Left ventricle myocardium superior (tissue), 1 donor: ENCODE measurements at regions of chr4 and their contacts with region 1.

Region 1: DNA sequence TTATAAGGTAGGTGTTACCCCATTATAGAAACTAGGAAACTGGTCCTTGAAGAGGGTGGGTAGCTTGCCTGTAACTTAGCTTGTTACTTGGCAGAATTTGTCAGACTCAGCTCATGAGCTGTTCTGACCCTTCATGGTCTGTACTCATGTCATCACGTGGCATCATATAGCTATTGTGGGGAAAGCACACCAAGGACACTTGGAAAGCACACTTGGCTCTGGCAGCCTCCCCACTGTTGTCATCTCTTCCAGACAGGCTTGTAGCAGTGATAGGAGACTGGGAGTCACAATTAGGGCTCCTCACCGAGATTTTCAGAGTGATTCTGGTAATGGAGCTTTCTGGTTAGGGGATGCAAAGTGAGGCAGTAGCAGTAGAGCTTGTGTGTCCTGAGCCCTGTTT is 30.4 kb downstream of the ADH5 start:
- DNase-seq: peak; percentile 73
- ATAC-seq: peak; percentile 77

Region 2: GRCh38 chr4:98566361-98567008 is 491.7 kb before region 1 on chr4:
- intact Hi-C with region 1: no loop called
- DNase-seq: no peak
- ATAC-seq: peak; percentile 48

Region 3: DNA sequence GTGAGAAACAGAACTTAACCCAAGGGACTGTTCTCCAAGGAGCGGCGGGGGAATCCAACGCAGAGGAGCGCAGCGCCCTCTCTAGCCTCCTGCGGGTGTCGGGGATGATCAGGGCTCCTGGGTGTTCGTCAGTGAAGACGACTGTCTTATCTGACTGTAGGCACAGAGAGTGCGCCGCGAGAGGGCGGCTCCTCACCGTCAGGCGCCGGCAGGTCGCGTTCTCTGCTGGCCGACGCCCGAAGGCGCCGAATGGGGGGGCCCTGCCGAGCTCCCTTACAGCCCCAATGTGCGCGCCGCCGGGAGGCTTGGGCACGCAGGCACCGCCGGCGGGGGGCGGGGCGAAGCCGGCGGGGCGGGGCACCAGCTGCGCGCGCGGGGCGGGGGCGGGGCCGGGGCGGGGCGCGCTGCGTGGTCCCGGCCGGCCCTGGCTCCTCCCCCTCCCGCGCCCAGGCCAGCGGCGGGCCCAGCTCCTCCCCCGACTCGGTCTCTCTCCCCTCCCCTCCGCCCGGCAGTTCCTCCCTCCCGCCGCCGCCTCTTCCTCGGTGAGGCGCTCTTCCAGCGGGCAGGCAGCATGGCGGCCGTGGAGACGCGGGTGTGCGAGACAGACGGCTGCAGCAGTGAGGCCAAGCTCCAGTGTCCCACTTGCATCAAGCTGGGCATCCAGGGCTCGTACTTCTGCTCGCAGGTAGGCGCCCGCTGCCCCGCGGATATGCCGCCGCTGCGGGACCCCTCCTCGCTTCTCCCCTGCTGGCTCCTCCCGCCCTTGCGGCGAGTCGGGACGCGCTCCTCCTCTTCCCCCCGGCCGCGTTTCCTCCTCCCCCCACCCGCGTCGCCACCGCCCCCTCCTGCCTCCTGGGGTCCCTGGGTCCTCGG is 62.8 kb before region 1 on chr4 and contains the start of gene METAP1:
- intact Hi-C with region 1: loop called (anchors 5 kb)
- DNase-seq: peak; percentile 97
- ATAC-seq: peak; percentile 94
- total RNA-seq, gene METAP1: 75.8 TPM